Ascending aorta (tissue), 2 donors: ENCODE measurements at regions of chrX and their contacts with region 1.

Region 1: DNA sequence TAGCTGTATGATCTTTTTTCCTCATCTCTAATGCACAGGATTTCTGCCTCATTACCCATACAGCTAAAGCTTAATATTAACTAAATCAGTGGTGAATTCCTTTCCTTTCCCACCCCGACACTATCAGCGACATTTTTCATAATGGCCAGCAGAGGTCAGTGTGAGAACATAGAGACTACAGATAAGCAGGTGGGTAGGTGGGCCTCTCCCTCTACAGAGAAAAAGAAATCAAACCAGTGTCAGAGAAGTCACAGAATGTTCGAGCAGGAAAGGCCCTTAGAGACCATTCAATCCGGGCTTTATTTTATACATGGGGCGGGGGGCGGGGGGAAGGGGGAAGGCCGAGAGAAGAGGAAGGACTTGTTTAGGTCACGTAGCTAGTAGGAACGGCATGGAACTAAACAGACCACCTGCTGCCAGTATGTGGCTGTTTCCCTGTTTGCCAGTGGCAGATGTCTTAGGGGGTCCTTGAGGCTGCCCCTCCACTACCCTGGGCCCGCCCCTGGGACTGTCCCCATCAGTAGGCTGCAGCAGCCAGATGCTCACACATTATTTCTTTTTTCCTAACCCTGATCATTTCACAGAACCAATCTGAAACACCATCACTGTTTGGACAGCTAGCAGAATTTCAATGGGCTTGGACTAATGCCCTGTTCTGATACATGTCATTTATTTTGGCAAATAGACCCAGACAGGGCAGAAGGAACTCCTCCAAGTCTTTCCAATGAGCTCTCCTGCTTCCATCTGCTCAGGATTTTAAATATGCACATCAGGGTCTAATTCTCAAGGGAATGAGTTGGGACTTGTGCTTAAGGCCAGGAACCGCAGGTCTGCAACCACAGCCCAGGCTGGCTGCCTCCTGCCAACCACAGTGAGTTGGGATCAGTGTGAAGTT is 133.4 kb downstream of the ATG4A start:
- DNase-seq: no peak
- H3K4me3 ChIP-seq: peak overlapping the region in 1 of 2 donors; percentile 8
- H3K27ac ChIP-seq: no peak overlapping the region
- H3K4me1 ChIP-seq: no peaks in the 10 kb centered on the region
- H3K27me3 ChIP-seq: no peaks in the 10 kb centered on the region
- CTCF ChIP-seq: peak in 2 of 3 experiments; percentile 46 to 68

Region 2: DNA sequence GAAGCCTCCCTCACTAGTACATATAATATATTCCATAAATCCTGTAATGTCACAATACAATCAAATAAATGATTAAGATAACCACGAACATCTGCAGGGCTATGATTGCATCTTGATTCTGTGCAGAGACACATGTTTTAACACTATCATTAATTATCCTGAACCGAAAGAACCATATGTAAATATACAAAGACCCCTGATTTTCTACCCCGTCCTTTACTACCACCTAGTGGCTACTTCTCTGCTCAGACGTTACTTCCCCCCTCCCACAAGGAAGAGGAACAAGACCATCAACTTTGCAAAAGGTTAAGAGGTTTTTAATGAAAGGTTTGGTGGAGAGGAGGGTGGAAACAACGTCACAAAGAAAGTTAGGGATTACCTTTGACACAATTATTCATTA is 79.2 kb after region 1 on chrX:
- intact Hi-C with region 1: loop called (anchors 10 kb)
- DNase-seq: no peak
- H3K4me3 ChIP-seq: no peak overlapping the region
- H3K27ac ChIP-seq: no peak overlapping the region
- H3K4me1 ChIP-seq: no peaks in the 10 kb centered on the region
- H3K27me3 ChIP-seq: no peaks in the 10 kb centered on the region
- CTCF ChIP-seq: no peak

Region 3: DNA sequence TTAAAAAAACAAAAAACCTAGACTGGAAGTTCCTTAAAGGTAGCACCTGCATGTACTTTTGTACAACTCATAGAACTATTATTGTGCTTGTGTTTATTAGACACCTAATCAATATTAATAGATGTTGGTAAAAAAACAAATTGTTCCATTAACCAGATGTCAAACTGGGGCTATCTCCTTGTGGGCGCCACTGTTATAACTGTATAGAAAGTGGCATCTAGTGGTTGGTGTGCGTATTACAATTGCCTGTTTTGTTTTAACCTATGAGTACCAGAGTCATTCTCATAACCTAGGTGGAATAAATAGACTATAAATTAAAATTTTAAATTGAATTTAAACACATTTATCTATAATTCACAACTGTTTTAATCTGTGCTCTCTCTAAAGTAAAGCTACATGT is 312.0 kb after region 1 on chrX:
- intact Hi-C with region 1: loop called (anchors 2 kb)
- DNase-seq: no peak
- H3K4me3 ChIP-seq: no peak overlapping the region
- H3K27ac ChIP-seq: no peak overlapping the region
- H3K4me1 ChIP-seq: no peaks in the 10 kb centered on the region
- H3K27me3 ChIP-seq: no peaks in the 10 kb centered on the region
- CTCF ChIP-seq: peak; percentile 25 to 58 (median 54)

Region 4: DNA sequence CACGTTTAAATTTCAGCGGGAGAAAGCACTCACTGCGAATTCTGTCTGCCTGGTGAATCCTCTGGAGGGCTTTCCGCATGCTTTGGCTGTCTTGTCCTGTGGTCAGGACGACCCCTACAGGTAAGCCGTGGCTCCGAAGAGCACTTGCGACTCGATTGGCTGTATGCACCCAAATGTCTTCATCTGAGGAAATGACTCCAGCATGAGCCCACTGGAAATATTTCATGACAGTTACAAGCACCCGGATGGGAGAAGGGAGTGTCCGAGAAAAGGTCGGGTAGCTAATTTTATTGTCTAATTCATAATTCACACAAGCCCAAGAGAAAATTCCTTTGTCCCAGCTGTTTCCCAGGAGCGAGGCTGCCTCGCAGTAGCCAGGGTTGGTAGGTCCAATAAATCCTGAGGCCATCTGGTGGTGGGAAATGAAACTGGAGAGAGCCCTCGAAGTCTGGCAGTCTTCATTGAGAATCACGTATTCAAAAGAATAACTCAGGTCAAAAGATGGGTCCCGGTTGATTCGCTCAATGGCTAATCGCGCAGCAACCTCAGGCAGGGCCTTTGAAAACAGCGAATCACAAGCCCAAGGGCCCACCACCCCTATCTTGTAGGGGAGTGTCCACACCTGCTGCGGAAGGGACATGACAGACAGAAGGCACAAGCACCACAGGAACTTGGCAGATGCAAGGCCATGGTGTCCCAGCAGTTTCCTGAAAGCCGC is 1250.4 kb after region 1 on chrX:
- intact Hi-C with region 1: loop called (anchors 10 kb)
- DNase-seq: no peak
- H3K4me3 ChIP-seq: no peak overlapping the region
- H3K27ac ChIP-seq: no peak overlapping the region
- H3K4me1 ChIP-seq: no peaks in the 10 kb centered on the region
- H3K27me3 ChIP-seq: no peaks in the 10 kb centered on the region
- CTCF ChIP-seq: peak; percentile 15 to 46 (median 41)